Right ventricle myocardium inferior (tissue), 1 donor: ENCODE measurements at regions of chr10 and their contacts with region 1.

Region 1: DNA sequence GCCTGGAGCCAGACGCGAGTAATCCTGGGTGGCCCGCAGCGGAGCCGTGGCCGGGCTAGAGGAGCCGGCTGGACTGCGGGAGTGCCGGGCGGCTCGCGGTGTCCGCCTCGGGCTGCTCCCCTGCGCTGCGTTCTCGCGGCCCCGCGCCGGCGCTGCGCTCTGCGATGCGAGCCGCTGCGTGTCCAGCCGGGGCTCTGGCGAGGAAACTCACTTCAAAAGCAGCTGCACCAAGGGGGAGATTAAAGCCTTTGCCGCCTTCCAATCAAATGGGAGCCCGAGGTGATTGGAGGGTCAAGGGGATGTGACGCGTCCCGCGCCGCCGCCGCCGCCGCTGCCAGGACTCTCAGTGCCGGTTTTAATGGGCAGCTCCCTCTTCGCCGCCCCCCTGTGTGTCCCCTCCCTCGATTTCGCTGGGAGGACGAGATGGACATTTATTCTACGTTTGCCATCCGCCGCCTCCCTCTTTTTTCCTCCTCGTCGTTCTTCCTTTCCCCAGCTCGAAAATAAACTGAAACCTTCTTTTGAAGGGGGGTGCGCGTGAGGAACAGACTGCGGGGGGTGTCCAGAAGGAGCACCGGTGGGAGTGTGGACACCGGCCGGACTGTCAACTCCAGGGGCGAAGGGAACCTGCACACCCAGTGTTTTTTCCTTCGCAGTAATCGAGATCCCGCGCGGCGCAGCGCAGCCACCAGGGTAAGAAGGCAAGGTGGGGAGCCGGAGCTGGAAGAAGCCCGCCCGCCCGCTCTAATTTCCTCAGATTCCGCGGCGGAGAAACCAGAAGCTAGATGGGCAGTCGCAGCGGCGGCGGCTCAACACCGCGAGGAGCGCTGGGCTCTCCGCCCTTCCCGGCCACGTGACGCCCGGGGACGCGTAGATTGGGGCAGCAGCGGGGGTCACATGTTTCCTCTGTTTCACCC is at the start of gene ZNF503:
- DNase-seq: peak; percentile 97
- ATAC-seq: peak; percentile 85
- total RNA-seq, gene ZNF503: 6.0 TPM

Region 2: DNA sequence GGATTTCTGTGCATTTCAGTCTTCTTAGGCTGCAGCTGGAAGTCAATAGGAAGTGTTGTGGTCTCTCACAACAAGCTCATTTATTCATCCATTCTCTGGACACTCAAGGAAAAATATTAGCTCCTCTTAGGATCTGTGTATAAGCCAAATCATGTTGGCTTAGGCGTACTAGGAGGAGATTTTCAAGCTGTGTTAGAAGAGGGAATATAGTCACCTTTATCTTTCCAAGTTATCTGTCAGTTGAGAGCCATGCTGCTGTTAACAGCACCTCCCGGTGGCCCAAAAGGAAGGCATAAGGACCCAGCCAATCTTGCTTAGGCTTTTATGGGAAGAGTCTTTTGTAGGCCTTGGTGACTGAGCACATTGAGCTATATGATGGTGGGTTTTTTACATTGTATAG is 249.6 kb after region 1 on chr10:
- intact Hi-C with region 1: loop called (anchors 5 kb)
- DNase-seq: no peak
- ATAC-seq: no peak

Region 3: DNA sequence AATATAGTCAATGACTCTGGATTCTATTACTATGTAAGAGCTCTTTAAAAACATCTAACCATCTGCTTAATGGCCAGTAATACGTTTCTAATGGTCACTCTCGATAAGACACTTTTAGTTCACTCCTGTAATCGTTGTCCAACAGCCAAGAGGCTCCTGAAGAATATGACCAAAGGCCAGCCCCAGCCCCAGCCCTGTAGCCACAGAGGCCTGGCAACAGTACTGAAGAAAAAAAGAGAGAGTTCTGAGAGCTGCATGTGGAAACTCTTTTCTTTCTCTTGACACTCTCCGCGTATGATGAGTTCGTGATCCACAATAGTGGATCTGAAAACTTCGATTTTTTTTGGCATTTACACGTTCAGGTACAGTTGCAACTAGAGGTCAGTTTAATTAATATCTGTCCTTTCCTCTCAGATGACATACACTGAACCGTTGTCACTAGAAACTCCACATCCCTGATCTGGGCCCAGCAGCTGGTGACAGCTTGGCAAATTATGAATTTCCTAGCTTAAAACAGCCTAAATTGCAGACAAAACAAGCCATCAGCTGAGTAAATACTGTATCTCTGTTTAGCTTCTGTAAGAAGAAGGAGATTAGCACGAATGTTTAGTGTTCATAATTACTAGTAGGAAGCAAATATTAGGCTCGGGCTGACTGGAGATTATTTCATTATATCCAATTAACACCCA is 486.3 kb after region 1 on chr10:
- intact Hi-C with region 1: no loop called
- DNase-seq: no peak
- ATAC-seq: no peak

Region 4: DNA sequence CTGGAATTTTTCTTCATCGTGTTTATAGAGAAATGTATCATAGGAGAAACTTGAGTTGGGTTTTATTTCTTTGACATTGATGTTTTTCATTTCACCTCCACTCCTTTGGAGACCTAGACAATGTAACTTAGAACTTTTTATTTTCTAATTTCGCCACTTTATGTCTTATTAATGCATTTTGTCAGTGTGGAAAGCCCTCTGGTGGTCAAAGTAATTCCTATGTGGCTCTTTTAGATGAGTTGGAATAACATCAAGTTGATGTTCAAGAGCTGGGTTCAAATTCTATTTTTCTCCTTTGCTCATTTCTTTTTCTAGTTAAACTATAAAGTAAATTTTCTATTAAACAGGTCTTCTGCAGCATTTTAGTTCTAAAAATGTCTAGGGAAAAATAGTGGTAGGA is 508.2 kb after region 1 on chr10:
- intact Hi-C with region 1: loop called (anchors 2 kb)
- DNase-seq: no peak
- ATAC-seq: no peak

Region 5: GRCh38 chr10:76150139-76150875 is 748.5 kb after region 1 on chr10:
- intact Hi-C with region 1: no loop called
- DNase-seq: no peak
- ATAC-seq: no peak

Region 6: DNA sequence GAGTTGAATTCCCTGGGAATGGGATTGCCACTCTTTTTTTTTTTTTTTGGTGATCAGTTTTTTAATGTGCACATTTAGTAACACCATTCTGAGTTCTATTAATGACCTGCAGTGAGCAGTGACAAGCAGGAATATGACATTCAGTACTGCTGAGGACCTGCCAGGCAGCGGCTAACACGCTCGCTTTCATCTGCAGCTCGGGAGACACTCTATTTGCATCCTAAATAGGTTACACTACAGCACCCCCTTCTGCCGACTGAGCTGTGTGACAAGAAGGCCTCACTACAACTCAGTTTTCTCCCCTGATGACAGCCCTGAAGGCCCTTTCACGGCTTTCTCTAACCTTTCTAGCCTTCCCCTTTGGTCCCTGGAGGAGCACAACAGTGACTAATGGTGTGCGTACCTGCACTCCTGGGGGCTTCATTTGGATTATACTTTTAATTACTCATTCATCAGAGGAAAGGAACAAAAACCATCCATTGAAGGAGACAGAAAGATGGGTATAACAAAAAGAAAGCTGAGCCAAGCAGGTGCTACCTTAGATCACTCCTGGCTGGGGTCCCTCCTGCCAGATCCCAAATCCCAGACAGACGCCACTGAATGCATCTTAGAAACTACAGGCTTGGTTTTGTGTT is 902.0 kb after region 1 on chr10:
- intact Hi-C with region 1: loop called (anchors 2 kb)
- DNase-seq: peak; percentile 77
- ATAC-seq: peak; percentile 96

Region 7: DNA sequence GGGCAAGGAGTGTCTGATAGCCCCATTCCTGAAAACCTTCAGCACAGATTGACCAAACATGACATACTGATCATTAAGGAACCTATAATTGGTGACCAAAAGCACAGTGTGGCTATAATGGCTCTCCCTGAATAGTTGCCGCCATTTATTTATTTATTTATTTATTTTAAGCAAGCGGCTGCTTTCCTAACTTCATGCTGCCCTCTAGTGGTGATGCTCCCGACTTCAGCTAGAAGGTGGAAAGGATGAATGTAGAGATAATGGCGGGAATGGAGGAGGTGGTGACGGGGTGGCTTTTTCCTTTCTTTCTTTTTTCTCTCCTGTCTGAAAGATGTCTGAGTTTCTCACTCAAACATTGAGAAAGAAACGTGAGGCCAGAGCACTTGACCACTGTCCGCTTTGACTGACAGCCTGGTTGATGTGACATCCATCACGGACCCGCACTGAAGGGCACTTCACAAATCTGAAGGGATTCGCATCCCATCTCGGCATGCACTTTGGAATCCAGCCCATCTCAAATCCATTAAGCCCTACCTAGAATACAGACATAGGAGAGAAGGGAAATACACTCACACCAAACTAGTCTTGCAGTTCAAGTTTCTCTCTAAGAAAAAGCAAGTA is 1145.6 kb after region 1 on chr10:
- intact Hi-C with region 1: loop called (anchors 2 kb)
- DNase-seq: no peak
- ATAC-seq: peak; percentile 64

Region 8: GRCh38 chr10:76984559-76985443 is 1583.0 kb after region 1 on chr10:
- intact Hi-C with region 1: loop called (anchors 5 kb)
- DNase-seq: peak; percentile 74
- ATAC-seq: peak; percentile 70